GM12878 (cell line): ENCODE measurements at regions of chr5 and their contacts with region 1.

Region 1: GRCh38 chr5:81301271-81302015 is at the start of gene ZCCHC9:
- DNase-seq: peak; percentile 79
- ATAC-seq: peak; percentile 92
- H3K4me3 ChIP-seq: peak within 1 kb of the TSS; percentile 76
- H3K27ac ChIP-seq: peak within 1 kb of the TSS; percentile 77
- H3K4me1 ChIP-seq: peaks cover 8% of the 10 kb centered on the region
- H3K27me3 ChIP-seq: no peaks in the 10 kb centered on the region
- CTCF ChIP-seq: peak; percentile 2 to 21 (median 12); a peak in 1 of 6 replicates
- EP300 ChIP-seq: peak; percentile 48 to 52; a peak in 2 of 4 replicates
- POLR2A ChIP-seq: peak; percentile 98
- RAD21 ChIP-seq: no peak; the same call in 1 of the 2 replicates
- polyA plus RNA-seq, gene ZCCHC9: 47.5 to 57.7 TPM

Region 2: GRCh38 chr5:80915716-80916115 is 385.7 kb before region 1 on chr5:
- CTCF ChIA-PET with region 1: no interaction called
- POLR2A ChIA-PET with region 1: no interaction called
- RAD21 ChIA-PET with region 1: no interaction called
- SMC1A ChIA-PET with region 1: no interaction called
- in situ Hi-C with region 1: no loop called
- intact Hi-C with region 1: no loop called
- DNase-seq: no peak
- ATAC-seq: no peak
- H3K4me3 ChIP-seq: no peak overlapping the region
- H3K27ac ChIP-seq: no peak overlapping the region
- H3K4me1 ChIP-seq: peaks cover 4% of the 10 kb centered on the region; the same call in 1 of the 2 replicates
- H3K27me3 ChIP-seq: no peaks in the 10 kb centered on the region
- CTCF ChIP-seq: no peak
- EP300 ChIP-seq: no peak
- POLR2A ChIP-seq: no peak
- RAD21 ChIP-seq: no peak

Region 3: GRCh38 chr5:81194633-81195333 is 106.7 kb before region 1 on chr5:
- CTCF ChIA-PET with region 1: interaction called, 16 read pairs
- POLR2A ChIA-PET with region 1: no interaction called
- RAD21 ChIA-PET with region 1: interaction called, 9 read pairs
- SMC1A ChIA-PET with region 1: interaction called, 7 read pairs
- in situ Hi-C with region 1: no loop called
- intact Hi-C with region 1: no loop called
- DNase-seq: no peak
- ATAC-seq: peak; percentile 100
- H3K4me3 ChIP-seq: no peak overlapping the region
- H3K27ac ChIP-seq: no peak overlapping the region
- H3K4me1 ChIP-seq: no peaks in the 10 kb centered on the region
- H3K27me3 ChIP-seq: no peaks in the 10 kb centered on the region; a peak in 1 of 4 replicates
- CTCF ChIP-seq: peak; percentile 94 to 97 (median 95)
- EP300 ChIP-seq: no peak
- POLR2A ChIP-seq: no peak
- RAD21 ChIP-seq: peak; percentile 96

Region 4: DNA sequence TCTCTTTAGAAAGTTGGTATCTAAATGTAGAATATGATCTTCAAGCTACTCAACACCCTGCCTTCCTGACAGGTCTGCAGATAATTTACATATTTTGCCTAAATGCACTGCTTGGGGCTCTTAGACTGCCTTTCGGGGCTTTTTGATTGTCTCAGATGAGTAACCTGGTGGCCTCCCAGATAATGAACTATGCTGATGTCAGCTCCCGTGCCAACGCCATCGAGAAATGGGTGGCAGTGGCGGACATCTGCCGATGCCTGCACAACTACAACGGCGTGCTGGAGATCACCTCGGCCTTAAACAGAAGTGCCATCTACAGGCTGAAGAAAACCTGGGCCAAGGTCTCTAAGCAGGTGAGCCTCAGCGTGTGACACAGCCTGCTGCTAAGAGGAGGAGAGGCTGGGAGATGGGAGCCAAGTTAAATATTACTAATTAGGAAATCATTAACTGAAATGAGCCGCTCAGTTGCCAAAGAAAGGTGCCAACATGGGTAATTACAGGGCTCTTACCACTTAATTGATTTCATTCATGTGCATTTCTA is 89.2 kb before region 1 on chr5:
- CTCF ChIA-PET with region 1: interaction called, 31 read pairs
- POLR2A ChIA-PET with region 1: interaction called, 4 read pairs
- RAD21 ChIA-PET with region 1: interaction called, 6 read pairs
- SMC1A ChIA-PET with region 1: interaction called, 11 read pairs
- in situ Hi-C with region 1: no loop called
- intact Hi-C with region 1: no loop called
- DNase-seq: peak; percentile 51
- ATAC-seq: peak; percentile 85
- H3K4me3 ChIP-seq: no peak overlapping the region
- H3K27ac ChIP-seq: no peak overlapping the region
- H3K4me1 ChIP-seq: peaks cover 18% of the 10 kb centered on the region; the same call in 1 of the 2 replicates
- H3K27me3 ChIP-seq: no peaks in the 10 kb centered on the region
- CTCF ChIP-seq: peak in 1 of 3 experiments; percentile 31; a peak in 2 of 6 replicates
- EP300 ChIP-seq: no peak
- POLR2A ChIP-seq: no peak
- RAD21 ChIP-seq: no peak

Region 5: GRCh38 chr5:81242906-81243436 is 58.5 kb before region 1 on chr5:
- CTCF ChIA-PET with region 1: interaction called, 40 read pairs
- POLR2A ChIA-PET with region 1: interaction called, 3 read pairs
- RAD21 ChIA-PET with region 1: interaction called, 9 read pairs
- SMC1A ChIA-PET with region 1: interaction called, 9 read pairs
- in situ Hi-C with region 1: no loop called
- intact Hi-C with region 1: no loop called
- DNase-seq: no peak
- ATAC-seq: peak; percentile 62
- H3K4me3 ChIP-seq: no peak overlapping the region
- H3K27ac ChIP-seq: no peak overlapping the region
- H3K4me1 ChIP-seq: peaks cover 3% of the 10 kb centered on the region; the same call in 1 of the 2 replicates
- H3K27me3 ChIP-seq: no peaks in the 10 kb centered on the region
- CTCF ChIP-seq: no peak
- EP300 ChIP-seq: no peak
- POLR2A ChIP-seq: no peak
- RAD21 ChIP-seq: no peak

Region 6: DNA sequence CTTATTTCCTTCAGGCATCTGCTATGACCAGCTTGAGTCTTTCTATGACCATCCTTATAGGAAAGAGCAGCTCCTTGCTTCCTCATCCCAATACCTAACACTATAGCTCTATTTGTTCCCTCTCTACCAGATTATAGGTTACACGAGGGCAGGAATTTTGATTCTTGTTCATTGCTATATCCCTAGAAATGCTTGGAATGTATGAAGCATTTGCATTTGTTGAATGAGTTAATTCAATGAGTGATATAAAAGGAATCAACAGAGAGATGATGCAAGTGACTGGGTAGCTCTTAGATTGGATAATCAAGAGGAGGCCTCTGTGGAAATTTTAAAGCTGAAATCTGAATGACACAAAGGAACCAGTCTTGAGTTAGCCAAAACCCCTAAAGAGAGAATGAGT is 13.9 kb after region 1 on chr5:
- CTCF ChIA-PET with region 1: interaction called, 16 read pairs
- POLR2A ChIA-PET with region 1: interaction called, 3 read pairs
- RAD21 ChIA-PET with region 1: no interaction called
- SMC1A ChIA-PET with region 1: interaction called, 6 read pairs
- in situ Hi-C with region 1: no loop called
- intact Hi-C with region 1: no loop called
- DNase-seq: no peak
- ATAC-seq: no peak
- H3K4me3 ChIP-seq: no peak overlapping the region
- H3K27ac ChIP-seq: no peak overlapping the region
- H3K4me1 ChIP-seq: no peaks in the 10 kb centered on the region
- H3K27me3 ChIP-seq: no peaks in the 10 kb centered on the region
- CTCF ChIP-seq: no peak
- EP300 ChIP-seq: no peak
- POLR2A ChIP-seq: no peak
- RAD21 ChIP-seq: no peak